B cell (primary cell): ENCODE measurements at regions of chr11 and their contacts with region 1.

Region 1: GRCh38 chr11:47426061-47426956 is at the start of gene PSMC3:
- DNase-seq: peak; percentile 97
- ATAC-seq: peak; percentile 98
- H3K4me3 ChIP-seq: peak within 1 kb of the TSS; percentile 88 to 99 (median 93)
- H3K4me3 Mint-ChIP-seq: peak within 1 kb of the TSS; percentile 100
- H3K27ac ChIP-seq: peak within 1 kb of the TSS; percentile 78 to 94
- H3K27ac Mint-ChIP-seq: peak within 1 kb of the TSS; percentile 98
- H3K4me1 ChIP-seq: peaks cover 9 to 22% of the 10 kb centered on the region in 2 donors
- H3K4me1 Mint-ChIP-seq: peaks cover 25% of the 10 kb centered on the region
- H3K27me3 ChIP-seq: no peaks in the 10 kb centered on the region
- H3K27me3 Mint-ChIP-seq: no peaks in the 10 kb centered on the region
- CTCF ChIP-seq: no peak
- total RNA-seq, gene PSMC3: 59.9 and 62.7 TPM in 2 replicates

Region 2: DNA sequence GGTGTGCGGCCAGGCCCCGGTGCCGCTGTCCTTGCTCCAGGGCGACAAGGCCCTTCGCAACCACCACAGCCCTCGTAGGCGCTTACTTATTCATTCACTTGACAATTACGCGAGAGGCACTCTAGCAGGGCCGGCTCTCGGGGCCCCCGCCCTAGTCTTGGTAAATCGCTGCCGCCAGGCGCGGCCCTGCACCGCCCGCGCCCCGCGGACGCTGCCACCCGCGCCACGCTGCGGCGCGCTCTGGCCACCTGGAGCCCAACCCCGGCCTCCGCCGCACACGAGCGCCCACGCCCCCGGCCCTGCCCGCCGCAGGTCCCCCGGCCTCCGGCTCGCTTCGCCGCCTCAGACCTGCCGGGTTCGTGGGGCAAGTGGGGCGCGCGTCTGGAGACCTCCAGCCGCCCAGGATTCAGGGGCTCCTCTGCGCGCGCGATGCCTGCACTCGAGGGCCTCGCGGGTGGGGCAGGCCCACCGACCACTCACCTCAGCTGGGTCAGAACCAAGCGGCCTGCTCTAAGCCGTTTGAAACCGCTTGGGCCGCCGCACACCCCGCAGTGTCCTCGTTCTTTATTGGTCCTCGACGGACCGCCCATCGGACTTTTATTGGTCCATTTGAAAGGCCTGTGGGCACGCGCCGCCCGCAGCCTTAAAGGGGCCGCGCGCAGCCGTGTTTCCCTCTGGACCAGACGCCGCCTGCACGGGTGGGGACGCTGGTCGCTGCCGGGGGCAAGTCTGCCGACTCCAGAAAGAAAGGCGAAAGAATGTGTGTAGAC is 580.4 kb before region 1 on chr11 and contains the start of gene CKAP5:
- CTCF ChIA-PET with region 1: no interaction called
- POLR2A ChIA-PET with region 1: no interaction called
- intact Hi-C with region 1: loop called (anchors 1 kb)
- DNase-seq: peak; percentile 91
- ATAC-seq: peak; percentile 89
- H3K4me3 ChIP-seq: peak within 1 kb of the TSS; percentile 36 to 89 (median 83)
- H3K4me3 Mint-ChIP-seq: peak within 1 kb of the TSS; percentile 97
- H3K27ac ChIP-seq: peak within 1 kb of the TSS; percentile 65 to 67
- H3K27ac Mint-ChIP-seq: peak within 1 kb of the TSS; percentile 97
- H3K4me1 ChIP-seq: peaks cover 12 to 15% of the 10 kb centered on the region in 2 donors
- H3K4me1 Mint-ChIP-seq: peaks cover 31% of the 10 kb centered on the region
- H3K27me3 ChIP-seq: no peaks in the 10 kb centered on the region
- H3K27me3 Mint-ChIP-seq: no peaks in the 10 kb centered on the region
- CTCF ChIP-seq: no peak
- total RNA-seq, gene CKAP5: 49.4 and 54.3 TPM in 2 replicates

Region 3: GRCh38 chr11:47269002-47269828 is 157.1 kb before region 1 on chr11:
- CTCF ChIA-PET with region 1: no interaction called
- POLR2A ChIA-PET with region 1: interaction called, 4 read pairs
- intact Hi-C with region 1: loop called (anchors 1 kb)
- DNase-seq: peak; percentile 92
- ATAC-seq: peak; percentile 67
- H3K4me3 ChIP-seq: peak overlapping the region; percentile 58 to 89 (median 84)
- H3K4me3 Mint-ChIP-seq: peak overlapping the region; percentile 89
- H3K27ac ChIP-seq: peak overlapping the region; percentile 90 to 92
- H3K27ac Mint-ChIP-seq: peak overlapping the region; percentile 94
- H3K4me1 ChIP-seq: peaks cover 47 to 48% of the 10 kb centered on the region in 2 donors
- H3K4me1 Mint-ChIP-seq: peaks cover 55% of the 10 kb centered on the region
- H3K27me3 ChIP-seq: no peaks in the 10 kb centered on the region
- H3K27me3 Mint-ChIP-seq: no peaks in the 10 kb centered on the region
- CTCF ChIP-seq: no peak

Region 4: DNA sequence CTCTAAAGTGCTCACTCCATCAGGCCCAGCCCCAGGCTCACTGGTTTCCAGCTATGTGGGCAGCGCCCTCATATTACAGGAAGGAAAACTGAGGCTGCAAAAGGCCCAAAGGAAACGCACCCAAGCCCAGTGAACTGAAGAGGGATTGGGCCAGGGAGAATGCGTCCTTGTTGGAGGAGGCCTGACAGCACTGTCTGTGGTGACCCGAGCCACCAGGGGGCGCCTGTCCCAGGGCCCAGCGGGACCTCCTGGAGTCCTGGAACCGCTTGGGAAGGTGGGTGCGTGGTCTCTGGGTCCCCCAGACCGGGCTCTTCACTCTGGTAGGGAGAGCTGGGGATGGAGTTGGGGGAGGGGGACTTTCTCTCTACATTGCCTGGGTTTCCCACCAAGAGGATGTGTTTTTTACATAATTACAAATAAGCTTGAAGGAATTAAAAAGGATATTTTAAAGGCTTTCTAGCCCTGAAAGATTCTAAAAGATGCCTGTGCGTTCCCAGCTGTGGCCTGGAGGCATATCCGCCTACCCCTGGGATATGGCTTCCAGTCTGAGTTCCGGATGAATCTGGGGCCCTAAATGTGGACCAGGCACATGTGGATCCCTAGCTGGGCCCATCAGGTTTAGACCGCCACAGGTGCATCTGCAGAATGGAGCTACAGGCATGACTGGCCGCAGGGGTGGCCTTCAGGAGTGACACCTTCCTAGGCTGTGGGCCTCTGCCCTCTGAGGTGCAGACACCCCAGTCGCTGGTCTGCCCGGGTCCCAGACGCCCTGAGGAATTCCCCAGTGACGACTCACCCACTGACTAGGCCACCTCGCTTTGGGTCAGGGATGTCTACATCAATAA is 52.2 kb before region 1 on chr11:
- CTCF ChIA-PET with region 1: interaction called, 7 read pairs
- POLR2A ChIA-PET with region 1: interaction called, 4 read pairs
- intact Hi-C with region 1: loop called (anchors 1 kb)
- DNase-seq: peak; percentile 83
- ATAC-seq: peak; percentile 35
- H3K4me3 ChIP-seq: no peak overlapping the region
- H3K4me3 Mint-ChIP-seq: peak overlapping the region; percentile 41
- H3K27ac ChIP-seq: peak overlapping the region in 1 of 2 donors; percentile 68
- H3K27ac Mint-ChIP-seq: peak overlapping the region; percentile 65
- H3K4me1 ChIP-seq: peaks cover 40 to 46% of the 10 kb centered on the region in 2 donors
- H3K4me1 Mint-ChIP-seq: peaks cover 51% of the 10 kb centered on the region
- H3K27me3 ChIP-seq: no peaks in the 10 kb centered on the region
- H3K27me3 Mint-ChIP-seq: no peaks in the 10 kb centered on the region
- CTCF ChIP-seq: peak; percentile 91

Region 5: GRCh38 chr11:47578524-47579460 is 152.5 kb after region 1 on chr11 and contains the starts of genes KBTBD4 and NDUFS3:
- CTCF ChIA-PET with region 1: no interaction called
- POLR2A ChIA-PET with region 1: interaction called, 4 read pairs
- intact Hi-C with region 1: loop called (anchors 1 kb)
- DNase-seq: peak; percentile 94
- ATAC-seq: peak; percentile 95
- H3K4me3 ChIP-seq: peak within 1 kb of the TSS; percentile 61 to 91 (median 87)
- H3K4me3 Mint-ChIP-seq: peak within 1 kb of the TSS; percentile 96
- H3K27ac ChIP-seq: peak within 1 kb of the TSS; percentile 78 to 81
- H3K27ac Mint-ChIP-seq: peak within 1 kb of the TSS; percentile 98
- H3K4me1 ChIP-seq: peaks cover 25 to 26% of the 10 kb centered on the region in 2 donors
- H3K4me1 Mint-ChIP-seq: peaks cover 32% of the 10 kb centered on the region
- H3K27me3 ChIP-seq: no peaks in the 10 kb centered on the region
- H3K27me3 Mint-ChIP-seq: no peaks in the 10 kb centered on the region
- CTCF ChIP-seq: no peak
- total RNA-seq, gene KBTBD4: 20.3 and 20.7 TPM in 2 replicates
- total RNA-seq, gene NDUFS3: 76.2 and 79.5 TPM in 2 replicates

Region 6: DNA sequence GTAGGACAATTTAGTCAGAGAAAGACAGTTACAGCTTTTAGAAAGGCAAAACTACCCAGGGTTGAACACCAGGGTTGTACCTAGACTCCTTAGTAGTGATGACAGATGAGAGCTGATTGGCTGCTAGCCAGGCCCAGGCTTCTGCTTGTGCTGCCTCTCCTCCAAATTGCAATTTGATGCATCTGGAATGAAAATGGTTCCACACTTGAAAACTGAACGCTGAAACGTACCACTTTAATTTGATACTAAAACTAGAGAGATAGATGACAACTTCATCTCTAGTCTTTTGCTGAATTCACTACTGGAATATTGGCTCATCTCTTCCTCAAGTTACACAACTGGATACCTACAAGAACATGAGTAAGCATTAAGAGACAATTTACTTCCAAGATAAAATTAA is 360.1 kb after region 1 on chr11:
- CTCF ChIA-PET with region 1: no interaction called
- POLR2A ChIA-PET with region 1: no interaction called
- intact Hi-C with region 1: no loop called
- DNase-seq: no peak
- ATAC-seq: no peak
- H3K4me3 ChIP-seq: no peak overlapping the region
- H3K4me3 Mint-ChIP-seq: no peak overlapping the region
- H3K27ac ChIP-seq: no peak overlapping the region
- H3K27ac Mint-ChIP-seq: no peak overlapping the region
- H3K4me1 ChIP-seq: no peaks in the 10 kb centered on the region
- H3K4me1 Mint-ChIP-seq: no peaks in the 10 kb centered on the region
- H3K27me3 ChIP-seq: no peaks in the 10 kb centered on the region
- H3K27me3 Mint-ChIP-seq: no peaks in the 10 kb centered on the region
- CTCF ChIP-seq: no peak

Region 7: DNA sequence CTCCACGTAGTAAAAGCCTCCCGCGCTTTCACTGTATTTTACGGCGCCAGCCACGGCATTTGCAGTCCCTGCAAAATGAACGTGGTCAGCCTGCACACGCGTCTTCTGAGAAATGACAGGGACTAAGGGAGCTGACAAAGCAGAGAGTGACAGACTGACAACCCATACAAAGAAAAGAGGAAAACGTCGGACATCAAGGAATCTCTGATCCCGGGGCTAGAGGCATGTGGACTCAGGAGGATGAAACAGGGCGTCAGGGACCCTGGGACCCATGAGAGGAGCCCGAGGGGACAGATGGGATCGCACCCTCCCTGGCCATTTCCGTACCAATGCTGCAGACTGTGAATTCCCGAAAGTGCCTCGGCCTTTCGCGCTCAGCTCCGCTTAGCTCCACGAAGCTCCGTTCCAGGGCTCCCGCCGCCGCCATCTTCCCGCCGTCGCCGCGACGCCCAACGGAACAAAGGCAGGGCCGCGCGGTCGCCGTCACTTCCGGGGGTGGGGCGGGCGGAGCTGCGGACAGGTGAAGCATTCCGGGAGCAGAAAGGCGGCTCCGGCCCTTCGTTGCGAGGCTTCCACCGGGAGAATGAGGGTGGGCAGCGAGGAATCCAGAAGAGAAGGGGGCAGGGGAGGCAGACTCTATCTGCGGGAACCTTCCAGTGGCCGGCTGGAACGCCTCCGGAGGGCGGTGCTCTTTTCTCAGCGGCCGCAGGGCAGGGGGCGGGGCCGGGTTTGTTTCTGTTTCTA is 421.8 kb after region 1 on chr11 and contains the start of gene NUP160:
- CTCF ChIA-PET with region 1: no interaction called
- POLR2A ChIA-PET with region 1: no interaction called
- intact Hi-C with region 1: loop called (anchors 1 kb)
- DNase-seq: peak; percentile 92
- ATAC-seq: peak; percentile 77
- H3K4me3 ChIP-seq: peak within 1 kb of the TSS; percentile 93 to 99 (median 98)
- H3K4me3 Mint-ChIP-seq: peak within 1 kb of the TSS; percentile 99
- H3K27ac ChIP-seq: peak within 1 kb of the TSS; percentile 94 to 95
- H3K27ac Mint-ChIP-seq: peak within 1 kb of the TSS; percentile 98
- H3K4me1 ChIP-seq: peaks cover 62 to 66% of the 10 kb centered on the region in 2 donors
- H3K4me1 Mint-ChIP-seq: peaks cover 57% of the 10 kb centered on the region
- H3K27me3 ChIP-seq: no peaks in the 10 kb centered on the region
- H3K27me3 Mint-ChIP-seq: no peaks in the 10 kb centered on the region
- CTCF ChIP-seq: no peak
- total RNA-seq, gene NUP160: 74.3 and 77.3 TPM in 2 replicates